Heart right ventricle (tissue), 16 donors: ENCODE measurements at regions of chr9 and their contacts with region 1.

Region 1: GRCh38 chr9:107826966-107827703 is 337.6 kb upstream of the KLF4 start:
- DNase-seq: no peak
- ATAC-seq: peak in 1 of 8 donors; percentile 50
- H3K4me3 ChIP-seq: no peak overlapping the region
- H3K27ac ChIP-seq: no peak overlapping the region
- H3K4me1 ChIP-seq: peaks cover 0 to 4% (median 0%) of the 10 kb centered on the region in 9 donors
- H3K27me3 ChIP-seq: no peaks in the 10 kb centered on the region
- CTCF ChIP-seq: no peak

Region 2: DNA sequence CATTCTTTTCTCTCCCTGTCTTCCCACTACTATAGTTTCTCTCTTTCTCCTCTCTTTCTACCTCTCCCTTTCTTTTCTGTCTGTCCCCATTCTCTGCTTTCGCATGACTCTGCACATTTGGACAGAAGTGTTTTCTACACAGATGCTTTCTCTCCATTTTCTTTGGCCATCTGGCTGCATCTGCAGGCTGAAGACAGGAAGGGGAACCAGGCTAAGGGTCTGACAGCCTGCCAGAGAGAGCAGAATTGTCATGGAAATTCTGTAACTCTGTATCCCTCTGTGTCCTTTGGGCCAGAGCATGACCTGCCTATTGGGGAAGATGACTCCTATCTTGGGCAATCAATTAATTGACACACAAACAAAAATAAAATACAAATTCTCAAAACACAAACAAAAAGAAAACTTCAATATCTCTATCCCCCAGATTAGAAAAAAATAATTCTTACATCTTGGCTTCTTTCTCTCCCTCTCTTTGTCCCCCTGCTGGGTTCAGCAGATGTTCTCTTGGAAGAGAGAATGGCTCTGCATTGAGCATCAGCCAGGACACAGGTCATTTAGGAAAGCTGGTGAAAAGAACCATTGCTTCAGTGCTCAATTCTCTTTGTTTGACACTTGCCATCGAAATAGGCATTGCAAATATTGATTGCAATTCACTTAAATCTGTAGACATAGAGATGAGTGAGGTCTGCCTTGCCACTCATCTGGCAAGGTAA is 78.3 kb after region 1 on chr9:
- intact Hi-C with region 1: loop called in 1 of 10 experiments (anchors 10 kb)
- DNase-seq: peak in 1 of 2 donors; percentile 17
- ATAC-seq: peak in 7 of 8 donors; percentile 49 to 85 (median 74)
- H3K4me3 ChIP-seq: no peak overlapping the region
- H3K27ac ChIP-seq: peak overlapping the region in 1 of 10 donors; percentile 30
- H3K4me1 ChIP-seq: peaks cover 0 to 9% (median 0%) of the 10 kb centered on the region in 9 donors
- H3K27me3 ChIP-seq: no peaks in the 10 kb centered on the region
- CTCF ChIP-seq: no peak